Common myeloid progenitor, CD34-positive (primary cell): ENCODE measurements at regions of chr3 and their contacts with region 1.

Region 1: DNA sequence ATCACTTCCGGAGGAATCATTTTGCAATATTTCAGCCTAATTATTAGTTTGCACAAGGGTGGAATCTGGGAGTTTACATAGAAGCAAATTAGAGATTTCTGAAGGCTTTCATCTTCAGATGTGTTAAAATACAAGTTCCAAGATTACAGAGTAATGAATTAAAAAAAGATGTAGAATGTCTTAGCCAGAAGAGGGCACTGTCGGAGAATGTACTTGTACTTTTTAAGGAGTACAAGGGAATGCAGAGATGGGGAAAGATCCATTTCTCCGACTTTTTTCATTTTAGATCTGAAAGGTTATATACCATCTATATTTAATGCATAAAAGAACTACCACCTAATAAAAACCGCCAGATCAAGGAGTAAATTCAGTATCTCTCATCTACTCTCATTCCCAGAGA is 43.1 kb upstream of the WDR5B start:
- DNase-seq: peak; percentile 56 to 72 (median 67)
- H3K4me3 ChIP-seq: no peak overlapping the region
- H3K27ac ChIP-seq: no peak overlapping the region
- H3K4me1 ChIP-seq: peaks cover 10 to 26% (median 13%) of the 10 kb centered on the region in 4 experiments
- H3K27me3 ChIP-seq: no peaks in the 10 kb centered on the region

Region 2: GRCh38 chr3:122468896-122469533 is 10.0 kb after region 1 on chr3:
- CTCF ChIA-PET with region 1: interaction called, 22 read pairs
- POLR2A ChIA-PET with region 1: no interaction called
- DNase-seq: no peak
- H3K4me3 ChIP-seq: no peak overlapping the region
- H3K27ac ChIP-seq: peak overlapping the region in 1 of 2 experiments; percentile 4
- H3K4me1 ChIP-seq: peaks cover 0 to 18% (median 4%) of the 10 kb centered on the region in 4 experiments
- H3K27me3 ChIP-seq: no peaks in the 10 kb centered on the region

Region 3: GRCh38 chr3:122560680-122561079 is 101.7 kb after region 1 on chr3:
- CTCF ChIA-PET with region 1: interaction called, 19 read pairs
- POLR2A ChIA-PET with region 1: no interaction called
- DNase-seq: peak; percentile 72 to 86 (median 85)
- H3K4me3 ChIP-seq: no peak overlapping the region
- H3K27ac ChIP-seq: no peak overlapping the region
- H3K4me1 ChIP-seq: peaks cover 10 to 26% (median 21%) of the 10 kb centered on the region in 4 experiments
- H3K27me3 ChIP-seq: no peaks in the 10 kb centered on the region

Region 4: GRCh38 chr3:122628569-122628968 is 169.6 kb after region 1 on chr3:
- CTCF ChIA-PET with region 1: no interaction called
- POLR2A ChIA-PET with region 1: no interaction called
- DNase-seq: no peak
- H3K4me3 ChIP-seq: no peak overlapping the region
- H3K27ac ChIP-seq: no peak overlapping the region
- H3K4me1 ChIP-seq: no peaks in the 10 kb centered on the region
- H3K27me3 ChIP-seq: no peaks in the 10 kb centered on the region